Psoas muscle (tissue), 8 donors: ENCODE measurements at regions of chr1 and their contacts with region 1.

Region 1: DNA sequence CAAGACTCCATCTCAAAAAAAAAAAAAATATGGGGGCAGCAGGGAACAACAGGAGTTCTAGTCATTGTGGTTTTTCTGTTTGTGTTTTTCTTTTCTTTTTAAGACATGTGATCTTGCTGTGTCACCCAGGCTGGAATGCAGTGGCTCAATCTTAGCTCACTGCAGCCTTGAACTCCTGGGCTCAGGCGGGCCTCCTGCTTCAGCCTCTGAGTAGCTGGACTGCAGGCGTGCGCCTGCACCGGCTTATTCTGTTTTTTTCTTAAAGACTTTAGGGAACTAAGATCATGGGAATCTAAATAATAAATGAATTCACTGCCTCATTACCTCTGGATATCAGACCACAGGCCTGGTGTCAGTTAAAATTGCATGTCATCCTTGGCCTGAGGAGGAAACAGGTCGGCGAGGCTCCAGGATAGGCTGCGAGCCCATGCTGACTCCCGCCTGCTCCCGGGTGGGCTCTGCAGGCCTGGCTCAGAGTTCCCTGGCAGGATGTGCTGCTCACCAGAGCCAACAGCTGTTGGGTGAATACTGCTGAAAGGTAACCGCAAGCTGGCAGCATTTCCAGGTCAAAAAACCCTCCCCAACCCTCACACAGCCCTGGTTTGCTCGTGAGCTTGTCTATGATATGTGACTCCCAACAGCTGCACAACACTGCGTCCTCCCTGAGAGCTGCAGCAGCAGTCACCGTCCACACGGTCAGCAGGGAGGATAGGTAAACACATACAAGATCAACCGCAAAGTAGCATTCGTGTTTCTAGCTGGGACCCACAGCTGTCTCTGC is 58.1 kb downstream of the SCCPDH start:
- DNase-seq: peak; percentile 75 to 80
- ATAC-seq: peak; percentile 89 to 94 (median 92)
- H3K4me3 ChIP-seq: no peak overlapping the region
- H3K27ac ChIP-seq: peak overlapping the region; percentile 88
- H3K4me1 ChIP-seq: peaks cover 35% of the 10 kb centered on the region
- H3K27me3 ChIP-seq: no peaks in the 10 kb centered on the region
- CTCF ChIP-seq: no peak

Region 2: DNA sequence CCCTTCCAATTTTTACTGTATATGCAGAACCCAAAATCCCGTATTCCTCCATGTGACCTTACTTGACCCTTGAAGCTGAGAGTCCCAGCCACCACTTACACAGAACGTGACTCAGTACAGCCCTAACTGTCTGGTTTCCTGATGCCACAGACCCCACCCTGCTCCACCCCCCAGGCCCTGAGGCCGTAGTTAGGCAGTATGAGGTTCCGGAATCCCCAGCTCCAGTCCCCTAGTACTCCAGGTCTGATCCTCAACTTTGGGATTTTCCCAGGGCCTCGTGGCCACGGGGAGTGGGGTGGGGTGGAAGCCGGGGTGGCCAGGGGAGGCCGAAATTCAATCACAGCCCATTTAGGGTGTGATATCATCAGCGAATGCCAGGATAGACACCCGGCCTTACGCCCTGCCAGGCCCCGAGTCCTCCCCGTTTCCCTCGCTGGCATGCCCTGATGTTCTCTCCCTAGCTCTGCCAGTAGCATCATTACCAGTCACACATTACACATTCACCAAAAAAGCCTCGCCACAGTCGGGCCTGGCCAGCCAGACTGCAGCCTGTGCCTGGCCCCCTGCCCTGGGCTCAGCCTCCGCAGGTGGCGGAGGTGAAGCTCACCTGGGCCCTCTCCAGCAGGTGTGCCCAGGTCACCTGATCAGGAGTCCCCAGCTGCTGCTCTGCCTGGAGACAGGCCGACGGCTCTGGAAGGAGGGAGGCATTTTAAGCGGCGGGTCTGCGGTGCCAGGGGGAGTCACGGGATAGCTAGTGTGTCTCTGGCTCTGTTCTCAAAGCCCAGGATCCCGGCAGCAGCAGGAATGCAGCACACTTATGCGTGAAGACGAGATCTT is 12.7 kb after region 1 on chr1:
- intact Hi-C with region 1: loop called in 1 of 2 experiments (anchors 2 kb)
- DNase-seq: no peak
- ATAC-seq: peak; percentile 20 to 68 (median 45)
- H3K4me3 ChIP-seq: no peak overlapping the region
- H3K27ac ChIP-seq: peak overlapping the region; percentile 43
- H3K4me1 ChIP-seq: peaks cover 23% of the 10 kb centered on the region
- H3K27me3 ChIP-seq: no peaks in the 10 kb centered on the region
- CTCF ChIP-seq: no peak

Region 3: GRCh38 chr1:246893191-246893939 is 111.1 kb after region 1 on chr1:
- intact Hi-C with region 1: no loop called
- DNase-seq: no peak
- ATAC-seq: no peak
- H3K4me3 ChIP-seq: no peak overlapping the region
- H3K27ac ChIP-seq: no peak overlapping the region
- H3K4me1 ChIP-seq: no peaks in the 10 kb centered on the region
- H3K27me3 ChIP-seq: no peaks in the 10 kb centered on the region
- CTCF ChIP-seq: no peak